ENCODE measurements at regions of chr1 and their contacts with region 1.

Region 1: GRCh38 chr1:178752891-178753290 is 27.8 kb downstream of the RALGPS2 start:
- DNase-seq: no peak
- ATAC-seq: no peak
- H3K4me3 ChIP-seq: no peak overlapping the region
- H3K27ac ChIP-seq: no peak overlapping the region
- H3K4me1 ChIP-seq: no peaks in the 10 kb centered on the region
- H3K27me3 ChIP-seq: no peaks in the 10 kb centered on the region

Region 2: GRCh38 chr1:178542560-178543356 is 210.1 kb before region 1 on chr1:
- intact Hi-C with region 1: loop called (anchors 1 to 2 kb)
- DNase-seq: peak; percentile 90 to 97
- ATAC-seq: peak; percentile 97
- H3K4me3 ChIP-seq: peak overlapping the region; percentile 76 to 96
- H3K27ac ChIP-seq: peak overlapping the region in 1 of 2 donors; percentile 47
- H3K4me1 ChIP-seq: no peaks in the 10 kb centered on the region
- H3K27me3 ChIP-seq: no peaks in the 10 kb centered on the region

Region 3: DNA sequence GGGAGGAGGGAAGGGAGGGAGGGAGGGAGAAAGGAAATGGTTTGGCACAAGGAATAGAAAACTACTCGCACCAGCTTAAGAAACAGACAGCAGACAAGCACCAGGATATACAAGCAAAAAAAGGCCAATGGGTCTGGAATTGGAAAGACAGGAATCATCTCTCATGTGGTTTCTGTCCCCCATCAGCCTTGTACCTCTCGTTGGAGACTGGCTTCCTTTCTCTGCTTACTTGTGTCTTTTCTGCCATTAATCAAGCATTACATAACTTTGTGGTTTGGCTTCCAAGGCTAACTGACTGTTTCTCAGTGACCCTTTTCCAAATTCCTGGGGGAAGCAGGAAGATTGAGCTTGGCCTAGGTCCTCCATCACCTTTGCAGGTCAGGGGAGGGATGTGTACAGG is 39.6 kb before region 1 on chr1:
- intact Hi-C with region 1: no loop called
- DNase-seq: no peak
- ATAC-seq: no peak
- H3K4me3 ChIP-seq: no peak overlapping the region
- H3K27ac ChIP-seq: no peak overlapping the region
- H3K4me1 ChIP-seq: no peaks in the 10 kb centered on the region
- H3K27me3 ChIP-seq: no peaks in the 10 kb centered on the region

Region 4: GRCh38 chr1:178784131-178784536 is 31.2 kb after region 1 on chr1:
- intact Hi-C with region 1: no loop called
- DNase-seq: no peak
- ATAC-seq: no peak
- H3K4me3 ChIP-seq: no peak overlapping the region
- H3K27ac ChIP-seq: no peak overlapping the region
- H3K4me1 ChIP-seq: no peaks in the 10 kb centered on the region
- H3K27me3 ChIP-seq: no peaks in the 10 kb centered on the region

Region 5: DNA sequence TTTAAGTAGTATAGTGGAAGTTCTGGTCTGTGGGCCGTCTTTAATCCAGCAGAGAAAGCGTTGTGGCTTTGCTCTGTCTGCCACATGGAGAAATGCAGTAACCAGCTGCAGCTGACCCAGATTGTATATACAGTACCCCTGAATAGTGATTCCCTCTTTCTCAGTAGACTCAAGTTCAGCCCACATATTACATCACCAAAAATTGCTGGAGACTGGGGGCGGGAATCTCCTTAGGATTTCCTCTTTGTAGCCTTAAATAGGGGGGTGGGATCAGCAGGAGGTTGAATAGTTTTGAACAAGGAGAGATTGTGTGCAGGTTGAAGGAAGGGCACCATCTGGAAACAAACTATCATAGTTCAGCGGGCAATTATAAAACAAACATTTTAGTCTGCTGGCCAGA is 118.1 kb after region 1 on chr1 and contains the start of gene ANGPTL1:
- intact Hi-C with region 1: no loop called
- DNase-seq: no peak
- ATAC-seq: peak; percentile 64
- H3K4me3 ChIP-seq: peak within 1 kb of the TSS; percentile 75 to 93
- H3K27ac ChIP-seq: peak within 1 kb of the TSS; percentile 61 to 68
- H3K4me1 ChIP-seq: peaks cover 0 to 3% of the 10 kb centered on the region in 2 donors
- H3K27me3 ChIP-seq: no peaks in the 10 kb centered on the region
- total RNA-seq, gene ANGPTL1: 24.2 to 60.4 TPM

Measured in aorta (tissue), 5 donors.